ENCODE measurements at regions of chr6 and their contacts with region 1.

Region 1: DNA sequence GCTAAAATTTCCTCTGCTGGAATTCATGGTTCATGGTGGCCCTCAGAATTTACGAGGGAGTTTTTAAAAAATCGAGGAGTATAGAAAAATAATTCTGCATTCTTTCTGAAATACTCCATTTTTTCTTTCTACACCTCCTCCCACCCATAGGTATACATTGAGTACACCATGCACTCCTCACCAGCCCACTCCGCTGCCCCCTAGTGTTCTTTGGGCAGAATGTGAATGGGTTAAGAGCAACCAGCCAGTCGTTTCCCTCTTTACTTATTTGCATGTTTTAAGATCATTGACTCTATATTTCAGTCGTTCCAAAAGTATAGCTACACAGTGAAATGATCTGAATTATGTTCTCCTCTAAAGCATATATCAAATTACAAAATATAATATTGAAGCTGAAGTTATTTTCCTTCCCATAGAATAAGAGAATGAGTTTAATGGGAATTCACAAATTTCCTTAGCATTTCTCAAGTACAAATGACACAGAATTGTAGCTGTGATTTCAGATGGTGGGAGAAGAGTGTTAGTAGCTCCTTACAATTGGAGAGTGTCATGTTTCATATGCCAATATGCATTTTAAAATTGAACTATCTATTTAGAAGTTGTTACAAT is 977.7 kb upstream of the SLC35B3 start:
- DNase-seq: peak; percentile 34
- ATAC-seq: peak; percentile 99
- H3K4me3 ChIP-seq: no peak overlapping the region
- H3K27ac ChIP-seq: no peak overlapping the region
- H3K4me1 ChIP-seq: no peaks in the 10 kb centered on the region
- H3K27me3 ChIP-seq: no peaks in the 10 kb centered on the region
- CTCF ChIP-seq: peak; percentile 47 to 85 (median 80); a peak in 5 of 6 replicates
- POLR2A ChIP-seq: no peak
- RAD21 ChIP-seq: peak; percentile 64

Region 2: DNA sequence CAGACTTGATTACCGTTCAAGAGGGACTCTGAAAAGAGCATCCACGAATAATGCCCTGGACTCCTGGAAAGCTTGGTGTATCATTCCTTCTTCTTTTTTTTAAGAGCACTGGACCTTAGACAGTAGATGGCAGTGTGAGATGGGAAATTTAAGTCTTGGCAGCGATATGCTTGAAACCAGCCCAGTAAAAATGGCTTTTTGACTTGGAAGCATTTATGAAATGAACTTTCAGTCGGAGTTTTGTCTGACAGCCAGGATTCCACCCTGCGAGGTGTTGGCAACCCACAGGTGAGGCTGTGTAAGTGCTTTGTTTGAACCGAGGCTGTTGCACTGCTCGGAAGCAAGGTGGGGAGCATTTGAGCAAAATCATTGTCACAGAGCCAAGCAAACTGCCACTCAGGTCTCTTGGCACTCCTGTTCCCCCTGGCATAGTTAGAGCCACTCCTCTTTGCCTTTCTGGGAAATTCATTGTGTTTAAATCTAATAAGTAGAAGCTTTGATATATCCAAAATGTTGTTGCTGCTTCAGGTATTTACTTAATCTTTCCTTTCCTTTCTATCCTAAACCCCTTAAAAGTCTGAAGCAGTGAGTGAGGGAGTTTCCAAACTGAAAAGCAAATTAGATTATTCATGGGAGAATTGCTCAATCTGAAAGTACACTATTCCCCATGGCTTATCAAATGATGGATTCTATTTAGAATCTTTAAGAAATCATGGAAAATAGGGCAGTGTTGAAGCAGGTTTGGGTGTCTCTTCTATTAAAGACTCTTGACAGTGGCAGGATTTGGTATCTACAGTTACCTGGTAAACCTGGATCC is 704.9 kb before region 1 on chr6:
- CTCF ChIA-PET with region 1: no interaction called
- POLR2A ChIA-PET with region 1: no interaction called
- RAD21 ChIA-PET with region 1: no interaction called
- intact Hi-C with region 1: loop called (anchors 5 kb)
- DNase-seq: peak; percentile 48
- ATAC-seq: peak; percentile 92
- H3K4me3 ChIP-seq: peak overlapping the region in 1 of 2 experiments; percentile 28; a peak in 2 of 4 replicates
- H3K27ac ChIP-seq: no peak overlapping the region
- H3K4me1 ChIP-seq: peaks cover 0 to 5% of the 10 kb centered on the region in 2 experiments; a peak in 2 of 4 replicates
- H3K27me3 ChIP-seq: no peaks in the 10 kb centered on the region
- CTCF ChIP-seq: peak; percentile 45 to 61 (median 49); a peak in 5 of 6 replicates
- POLR2A ChIP-seq: no peak
- RAD21 ChIP-seq: peak; percentile 76

Region 3: DNA sequence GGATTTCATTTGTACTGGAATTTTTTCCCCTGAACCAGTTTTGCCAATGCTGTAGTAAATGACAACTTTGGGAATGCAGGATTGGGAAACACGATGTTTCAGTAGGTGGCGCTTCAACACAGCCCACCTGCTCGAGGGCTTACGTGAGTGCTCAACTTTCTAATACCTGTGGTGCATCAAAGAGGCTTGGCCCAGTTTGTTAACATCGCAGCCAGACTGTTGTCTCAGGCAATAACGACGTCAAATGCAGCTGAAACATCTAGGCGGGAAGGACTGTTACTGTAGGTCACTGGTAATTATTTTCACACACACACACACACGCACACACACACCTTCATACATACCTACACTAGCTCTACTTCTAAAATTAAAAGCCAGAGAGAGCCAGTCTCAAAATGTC is 162.2 kb before region 1 on chr6:
- CTCF ChIA-PET with region 1: no interaction called
- POLR2A ChIA-PET with region 1: no interaction called
- RAD21 ChIA-PET with region 1: no interaction called
- intact Hi-C with region 1: loop called (anchors 5 kb)
- DNase-seq: peak; percentile 63
- ATAC-seq: peak; percentile 97
- H3K4me3 ChIP-seq: no peak overlapping the region
- H3K27ac ChIP-seq: no peak overlapping the region
- H3K4me1 ChIP-seq: no peaks in the 10 kb centered on the region
- H3K27me3 ChIP-seq: no peaks in the 10 kb centered on the region
- CTCF ChIP-seq: peak; percentile 71 to 78 (median 73)
- POLR2A ChIP-seq: no peak
- RAD21 ChIP-seq: peak; percentile 94

Region 4: GRCh38 chr6:9484091-9484490 is 71.0 kb after region 1 on chr6:
- CTCF ChIA-PET with region 1: no interaction called
- POLR2A ChIA-PET with region 1: no interaction called
- RAD21 ChIA-PET with region 1: no interaction called
- intact Hi-C with region 1: no loop called
- DNase-seq: no peak
- ATAC-seq: no peak
- H3K4me3 ChIP-seq: no peak overlapping the region
- H3K27ac ChIP-seq: no peak overlapping the region
- H3K4me1 ChIP-seq: peaks cover 23 to 25% of the 10 kb centered on the region in 2 experiments
- H3K27me3 ChIP-seq: no peaks in the 10 kb centered on the region
- CTCF ChIP-seq: no peak
- POLR2A ChIP-seq: no peak
- RAD21 ChIP-seq: no peak

Measured in HCT116 (cell line).